Activated B cell treated with CpG ODN at 0.5 μM for 24 hours (primary cell): ENCODE measurements at regions of chr16 and their contacts with region 1.

Region 1: DNA sequence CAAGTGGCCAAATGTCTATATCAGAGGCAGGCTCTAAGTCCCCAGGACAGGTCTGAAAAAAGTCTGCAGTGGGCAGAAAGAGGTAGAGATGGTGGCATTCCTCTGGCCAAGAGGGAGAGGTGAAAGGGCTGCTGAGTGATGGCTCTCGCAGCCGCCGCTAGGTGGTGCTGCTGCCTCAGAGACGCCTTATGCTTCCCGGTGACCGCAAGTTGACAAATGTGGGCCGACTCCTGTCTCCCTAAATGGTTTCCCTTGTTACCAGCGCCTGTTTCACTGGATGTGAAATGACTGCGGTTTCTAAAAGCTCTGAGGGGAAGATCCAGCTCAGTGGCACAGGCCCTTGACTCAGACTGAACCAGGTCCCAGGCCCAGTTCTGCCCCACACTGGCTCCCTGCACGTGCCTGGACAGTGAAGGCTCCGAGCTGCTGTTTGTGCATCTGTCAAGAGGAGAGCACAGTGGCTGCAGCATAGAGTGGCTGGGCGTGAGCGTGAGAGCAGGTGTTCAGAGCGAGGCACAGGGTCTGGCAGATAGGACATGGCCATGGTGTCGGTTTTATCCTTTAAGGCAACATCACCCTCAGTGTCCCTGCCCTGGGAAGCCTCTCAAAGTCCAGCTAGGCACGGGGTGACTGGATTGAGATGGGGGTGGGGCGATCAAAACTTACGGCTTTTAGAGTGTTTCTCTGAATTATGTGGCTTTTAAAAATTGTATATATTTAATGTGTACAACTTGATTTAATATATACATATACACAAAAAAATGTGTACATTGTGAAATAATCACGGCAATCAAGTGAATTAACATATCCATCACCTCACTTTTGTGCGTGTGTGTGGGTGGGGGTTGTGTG is 19.9 kb downstream of the CLEC16A start:
- DNase-seq: peak; percentile 78
- ATAC-seq: peak; percentile 35
- H3K4me3 Mint-ChIP-seq: peak overlapping the region; percentile 66
- H3K27ac Mint-ChIP-seq: peak overlapping the region; percentile 94
- H3K4me1 Mint-ChIP-seq: peaks cover 52% of the 10 kb centered on the region
- H3K27me3 Mint-ChIP-seq: no peaks in the 10 kb centered on the region
- CTCF ChIP-seq: peak; percentile 93

Region 2: GRCh38 chr16:10949370-10949970 is 14.8 kb before region 1 on chr16:
- CTCF ChIA-PET with region 1: interaction called, 32 read pairs
- POLR2A ChIA-PET with region 1: interaction called, 20 read pairs
- intact Hi-C with region 1: loop called (anchors 1 kb)
- DNase-seq: peak; percentile 74
- ATAC-seq: peak; percentile 95
- H3K4me3 Mint-ChIP-seq: peak overlapping the region; percentile 75
- H3K27ac Mint-ChIP-seq: peak overlapping the region; percentile 94
- H3K4me1 Mint-ChIP-seq: peaks cover 70% of the 10 kb centered on the region
- H3K27me3 Mint-ChIP-seq: no peaks in the 10 kb centered on the region
- CTCF ChIP-seq: no peak

Region 3: DNA sequence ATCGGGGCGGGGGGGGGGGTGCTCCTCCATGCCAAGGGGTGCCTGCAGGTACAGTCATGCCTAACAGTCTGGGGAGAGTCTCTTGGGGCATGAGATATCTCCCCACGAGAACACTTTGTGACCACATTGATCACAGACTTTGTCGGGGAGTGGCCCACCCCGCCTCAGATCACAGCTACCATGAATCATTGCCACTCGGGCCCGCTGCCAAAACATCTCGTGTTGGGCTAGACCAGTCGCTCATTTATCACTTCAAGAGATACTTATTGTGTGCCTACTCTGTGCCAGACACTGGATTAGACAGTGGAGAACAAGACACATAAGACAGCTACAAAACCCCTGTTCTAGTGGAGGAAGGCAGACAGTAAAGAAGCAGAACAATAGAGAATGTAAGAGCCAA is 52.7 kb after region 1 on chr16:
- CTCF ChIA-PET with region 1: no interaction called
- POLR2A ChIA-PET with region 1: no interaction called
- intact Hi-C with region 1: no loop called
- DNase-seq: no peak
- ATAC-seq: no peak
- H3K4me3 Mint-ChIP-seq: no peak overlapping the region
- H3K27ac Mint-ChIP-seq: no peak overlapping the region
- H3K4me1 Mint-ChIP-seq: no peaks in the 10 kb centered on the region
- H3K27me3 Mint-ChIP-seq: no peaks in the 10 kb centered on the region
- CTCF ChIP-seq: no peak

Region 4: DNA sequence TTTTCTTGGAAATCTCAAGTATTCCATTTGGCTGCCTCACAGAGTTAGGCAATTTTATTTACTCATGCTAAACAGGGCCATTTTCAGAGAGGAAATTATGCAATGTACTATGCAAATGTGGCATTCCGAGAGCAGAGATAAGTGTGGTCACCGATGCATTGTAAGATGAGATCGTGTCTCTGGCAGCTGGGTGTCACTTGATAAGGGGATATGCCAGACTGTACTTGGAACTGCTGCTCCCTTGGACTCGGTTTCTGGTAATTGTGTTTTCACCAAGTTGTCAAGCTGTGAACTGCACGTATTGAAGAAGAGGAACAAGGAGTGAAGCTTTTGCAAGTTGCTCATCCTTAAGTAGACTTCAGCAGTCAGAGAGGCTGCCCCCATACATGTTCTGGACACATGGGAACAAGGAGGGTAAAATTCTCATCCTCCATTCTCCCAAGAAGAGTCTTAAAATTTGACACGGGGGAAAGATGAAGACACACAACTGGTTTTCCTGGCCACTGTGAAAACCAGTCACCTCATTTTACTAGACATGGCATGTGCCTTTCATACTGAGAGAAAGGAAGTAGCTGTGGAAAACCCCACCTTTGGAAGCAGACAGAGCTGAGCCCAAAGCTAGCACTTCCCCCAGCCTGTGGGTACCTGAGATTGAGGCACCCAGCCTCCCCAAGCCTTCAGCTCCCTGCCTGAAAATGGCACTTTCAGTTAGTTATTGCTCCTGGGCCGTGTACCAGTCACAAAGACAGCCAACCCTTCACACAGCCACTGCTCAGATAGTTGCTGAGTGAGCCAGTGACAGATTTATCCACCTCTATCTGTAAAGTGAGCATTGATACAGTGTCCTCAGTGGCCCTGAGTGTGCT is 141.0 kb after region 1 on chr16:
- CTCF ChIA-PET with region 1: no interaction called
- POLR2A ChIA-PET with region 1: interaction called, 8 read pairs
- intact Hi-C with region 1: loop called (anchors 5 kb)
- DNase-seq: no peak
- ATAC-seq: peak; percentile 87
- H3K4me3 Mint-ChIP-seq: peak overlapping the region; percentile 72
- H3K27ac Mint-ChIP-seq: peak overlapping the region; percentile 92
- H3K4me1 Mint-ChIP-seq: peaks cover 45% of the 10 kb centered on the region
- H3K27me3 Mint-ChIP-seq: no peaks in the 10 kb centered on the region
- CTCF ChIP-seq: no peak

Region 5: GRCh38 chr16:11297492-11298142 is 333.4 kb after region 1 on chr16:
- CTCF ChIA-PET with region 1: interaction called, 9 read pairs
- POLR2A ChIA-PET with region 1: interaction called, 18 read pairs
- intact Hi-C with region 1: loop called (anchors 1 kb)
- DNase-seq: peak; percentile 85
- ATAC-seq: peak; percentile 97
- H3K4me3 Mint-ChIP-seq: peak overlapping the region; percentile 73
- H3K27ac Mint-ChIP-seq: peak overlapping the region; percentile 85
- H3K4me1 Mint-ChIP-seq: peaks cover 72% of the 10 kb centered on the region
- H3K27me3 Mint-ChIP-seq: no peaks in the 10 kb centered on the region
- CTCF ChIP-seq: no peak

Region 6: DNA sequence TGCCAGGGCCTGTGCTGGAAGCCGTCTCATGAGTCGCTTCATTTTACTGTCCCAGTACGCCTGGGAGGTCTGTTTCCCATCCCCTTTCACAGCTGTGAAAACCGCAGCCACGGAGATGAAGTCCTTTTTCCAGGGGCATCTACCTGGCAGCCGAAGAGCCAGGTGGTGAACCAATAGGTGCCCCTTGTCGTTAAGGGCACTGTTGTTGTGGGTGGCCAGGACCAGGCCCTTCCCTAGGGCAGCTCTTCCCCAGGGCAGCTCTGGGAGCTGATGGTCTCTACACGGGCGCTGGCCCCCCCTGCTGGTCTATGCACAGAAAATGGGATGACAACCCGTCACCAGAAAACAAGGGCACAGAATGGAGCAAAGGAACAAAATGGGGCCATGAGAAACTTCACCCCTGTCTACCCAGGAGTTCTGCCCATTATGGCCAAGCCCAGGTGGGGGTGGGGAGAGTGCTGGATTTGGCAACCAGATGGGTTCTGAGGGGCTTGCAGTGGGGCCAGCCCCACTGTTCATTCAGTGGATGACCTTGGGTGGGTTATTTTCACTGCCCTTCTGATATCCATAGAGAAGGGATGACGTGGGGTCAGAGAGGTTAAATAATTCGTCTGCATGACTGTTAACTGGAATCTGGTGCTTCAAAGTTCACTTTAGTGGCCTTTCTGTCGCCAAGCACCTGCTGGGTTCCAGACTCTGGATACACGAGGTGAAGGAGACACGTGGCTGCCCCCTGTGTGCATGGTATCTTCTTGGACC is 392.5 kb after region 1 on chr16:
- CTCF ChIA-PET with region 1: interaction called, 19 read pairs
- POLR2A ChIA-PET with region 1: interaction called, 19 read pairs
- intact Hi-C with region 1: loop called (anchors 1 kb)
- DNase-seq: peak; percentile 46
- ATAC-seq: peak; percentile 30
- H3K4me3 Mint-ChIP-seq: no peak overlapping the region
- H3K27ac Mint-ChIP-seq: no peak overlapping the region
- H3K4me1 Mint-ChIP-seq: peaks cover 58% of the 10 kb centered on the region
- H3K27me3 Mint-ChIP-seq: peaks cover 21% of the 10 kb centered on the region
- CTCF ChIP-seq: no peak

Region 7: DNA sequence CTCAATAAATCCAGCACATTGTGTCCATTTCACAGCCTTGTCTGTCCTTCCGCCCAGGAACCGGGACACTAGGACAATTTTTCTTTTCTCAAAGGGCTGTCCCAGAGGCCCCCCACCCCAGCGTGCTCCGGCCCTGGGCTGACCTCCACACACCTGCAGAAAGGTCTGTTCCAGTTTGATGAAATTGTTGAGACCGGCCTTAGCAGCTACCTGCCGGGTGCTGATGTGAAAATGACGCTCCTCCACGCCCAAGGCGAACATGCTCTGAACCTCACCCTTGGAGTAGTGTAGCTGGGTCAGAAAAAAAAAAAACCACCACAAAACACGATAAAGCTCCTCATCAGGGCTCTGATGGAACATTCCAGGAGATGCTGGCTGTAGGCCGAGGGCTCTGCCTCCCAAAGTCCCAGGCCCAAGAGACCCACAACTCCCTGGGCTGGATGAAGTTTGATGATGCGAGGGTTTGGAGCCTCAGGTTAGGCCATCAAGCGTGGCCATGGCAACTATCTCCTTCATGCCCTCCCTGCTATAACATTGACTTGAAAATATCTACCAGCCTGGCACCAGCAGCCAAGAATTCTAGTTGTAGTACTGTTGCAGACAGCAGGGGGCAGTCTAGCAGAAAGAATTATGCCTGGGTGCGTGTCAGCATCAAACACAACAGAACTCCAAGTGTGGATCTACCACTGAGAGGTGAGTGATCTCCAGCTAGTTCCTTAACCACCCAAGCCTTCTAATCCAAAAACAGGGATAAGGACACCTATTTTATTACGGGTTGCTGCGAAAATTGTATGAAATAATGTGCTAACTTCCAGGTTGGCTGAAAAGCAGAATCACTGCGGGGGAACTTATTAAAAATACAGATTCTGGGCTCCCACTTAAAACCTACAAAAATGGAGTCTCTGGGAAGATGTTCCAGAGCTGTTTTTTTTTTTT is 443.1 kb after region 1 on chr16:
- CTCF ChIA-PET with region 1: interaction called, 46 read pairs
- POLR2A ChIA-PET with region 1: interaction called, 3 read pairs
- intact Hi-C with region 1: loop called (anchors 1 kb)
- DNase-seq: no peak
- ATAC-seq: peak; percentile 74
- H3K4me3 Mint-ChIP-seq: no peak overlapping the region
- H3K27ac Mint-ChIP-seq: no peak overlapping the region
- H3K4me1 Mint-ChIP-seq: no peaks in the 10 kb centered on the region
- H3K27me3 Mint-ChIP-seq: no peaks in the 10 kb centered on the region
- CTCF ChIP-seq: no peak

Region 8: DNA sequence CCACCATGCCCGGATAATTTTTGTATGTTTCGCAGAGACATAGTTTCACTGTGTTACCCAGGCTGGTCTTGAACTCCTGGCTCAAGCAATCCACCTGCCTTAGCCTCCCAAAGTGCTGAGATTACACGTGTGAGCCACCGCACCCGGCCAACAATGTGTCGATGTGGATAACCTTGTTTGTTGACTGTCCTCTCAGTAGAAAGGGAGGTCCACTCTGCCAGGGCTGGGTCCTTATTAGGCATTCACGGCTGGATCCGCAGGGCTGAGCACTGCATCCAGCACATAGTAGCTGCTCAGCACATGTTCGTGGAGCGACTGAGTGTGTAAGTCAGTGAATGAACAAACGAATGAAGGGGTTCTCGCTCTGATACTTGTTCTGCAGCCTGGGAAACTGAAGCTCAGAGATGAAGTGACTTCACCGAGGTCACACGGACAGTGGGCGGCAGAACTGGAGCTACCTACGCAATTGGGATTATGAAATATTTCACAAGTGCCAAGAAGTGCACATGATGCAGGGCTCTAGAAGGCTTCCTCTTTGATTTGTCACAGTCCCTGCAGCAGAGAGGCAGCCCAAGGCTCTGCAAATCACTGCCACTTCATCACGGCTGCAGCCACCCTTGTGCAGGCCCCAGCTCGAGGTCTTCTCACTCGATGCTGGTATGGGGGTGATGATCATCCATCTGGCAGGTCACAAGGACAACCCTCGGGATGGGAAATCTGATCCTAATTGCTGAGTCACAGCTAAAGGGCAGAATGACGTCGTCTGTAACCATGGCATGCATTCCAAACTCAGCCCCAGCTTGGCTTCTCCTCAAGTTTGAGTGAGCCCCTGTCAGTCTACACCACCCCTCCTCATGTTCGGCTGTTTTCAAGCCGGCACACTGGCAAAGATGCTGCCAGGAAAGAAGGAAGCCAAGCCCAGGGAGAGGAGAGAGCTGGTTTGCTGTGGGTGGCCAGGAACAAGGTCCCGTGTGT is 675.9 kb after region 1 on chr16:
- CTCF ChIA-PET with region 1: interaction called, 5 read pairs
- POLR2A ChIA-PET with region 1: no interaction called
- intact Hi-C with region 1: loop called (anchors 2 kb)
- DNase-seq: no peak
- ATAC-seq: no peak
- H3K4me3 Mint-ChIP-seq: no peak overlapping the region
- H3K27ac Mint-ChIP-seq: no peak overlapping the region
- H3K4me1 Mint-ChIP-seq: peaks cover 8% of the 10 kb centered on the region
- H3K27me3 Mint-ChIP-seq: no peaks in the 10 kb centered on the region
- CTCF ChIP-seq: no peak